GM13977 (cell line): ENCODE measurements at regions of chr5 and their contacts with region 1.

Region 1: DNA sequence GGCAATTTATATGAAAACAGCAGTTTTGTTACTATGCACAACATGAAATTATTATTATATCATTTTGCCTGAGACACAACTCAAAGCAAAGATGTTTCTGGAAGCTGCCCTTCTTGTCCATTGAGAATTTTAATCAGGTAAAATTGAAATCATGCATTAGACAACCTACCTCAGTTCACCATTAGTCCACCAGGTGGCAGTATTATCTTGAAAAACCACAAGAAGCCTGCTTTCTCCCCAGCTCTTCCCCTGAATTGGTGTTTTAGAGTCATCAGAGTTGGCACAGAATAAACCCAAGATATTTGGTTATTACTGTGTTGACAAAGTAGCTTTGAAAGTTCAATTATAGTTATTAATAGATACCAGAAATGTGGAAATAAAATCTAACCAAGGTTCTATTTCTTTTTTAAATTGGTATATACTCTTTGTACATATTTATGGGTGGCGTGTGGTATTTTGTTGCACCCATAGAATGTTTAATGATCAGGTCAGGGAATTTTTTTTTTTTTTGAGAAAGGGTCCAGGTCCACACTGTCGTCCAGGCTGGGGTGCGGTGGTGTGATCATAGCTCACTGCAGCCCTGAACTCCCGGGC is 25.7 kb downstream of the UTP15 start:
- DNase-seq: peak; percentile 39
- CTCF ChIP-seq: peak; percentile 70

Region 2: DNA sequence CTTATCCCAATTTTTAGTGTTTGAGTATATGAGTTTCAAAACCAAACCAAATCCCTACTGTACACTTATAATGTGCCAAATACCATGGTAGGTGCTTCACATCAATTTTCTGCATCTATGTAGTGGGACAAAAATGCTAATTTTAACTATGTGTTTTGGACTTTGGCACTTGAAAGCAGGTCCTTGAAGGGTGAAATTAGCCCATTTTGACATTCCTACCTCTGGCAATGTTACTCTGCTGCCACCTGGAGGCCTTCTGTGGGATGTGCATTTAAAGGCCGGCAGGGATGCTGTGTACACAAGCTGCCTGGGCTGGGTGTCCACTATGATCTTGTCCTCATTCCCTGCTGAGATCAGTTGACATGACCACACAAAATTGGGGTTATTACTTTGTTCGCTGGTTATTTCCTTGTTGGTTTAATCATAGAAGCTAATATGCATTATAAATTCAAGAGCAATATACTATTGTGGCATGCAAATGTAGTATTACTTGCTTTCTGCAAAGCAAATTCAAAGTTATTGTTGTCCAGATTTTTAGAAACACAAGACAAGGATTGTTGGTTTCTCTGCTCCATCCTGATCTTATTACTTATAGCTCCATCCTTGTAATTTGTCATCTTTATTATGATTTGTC is 201.6 kb after region 1 on chr5:
- in situ Hi-C with region 1: loop called (anchors 5 kb)
- DNase-seq: peak; percentile 52
- CTCF ChIP-seq: peak; percentile 92

Region 3: GRCh38 chr5:73902327-73903051 is 311.3 kb after region 1 on chr5:
- in situ Hi-C with region 1: no loop called
- DNase-seq: peak; percentile 57
- CTCF ChIP-seq: peak; percentile 70

Region 4: DNA sequence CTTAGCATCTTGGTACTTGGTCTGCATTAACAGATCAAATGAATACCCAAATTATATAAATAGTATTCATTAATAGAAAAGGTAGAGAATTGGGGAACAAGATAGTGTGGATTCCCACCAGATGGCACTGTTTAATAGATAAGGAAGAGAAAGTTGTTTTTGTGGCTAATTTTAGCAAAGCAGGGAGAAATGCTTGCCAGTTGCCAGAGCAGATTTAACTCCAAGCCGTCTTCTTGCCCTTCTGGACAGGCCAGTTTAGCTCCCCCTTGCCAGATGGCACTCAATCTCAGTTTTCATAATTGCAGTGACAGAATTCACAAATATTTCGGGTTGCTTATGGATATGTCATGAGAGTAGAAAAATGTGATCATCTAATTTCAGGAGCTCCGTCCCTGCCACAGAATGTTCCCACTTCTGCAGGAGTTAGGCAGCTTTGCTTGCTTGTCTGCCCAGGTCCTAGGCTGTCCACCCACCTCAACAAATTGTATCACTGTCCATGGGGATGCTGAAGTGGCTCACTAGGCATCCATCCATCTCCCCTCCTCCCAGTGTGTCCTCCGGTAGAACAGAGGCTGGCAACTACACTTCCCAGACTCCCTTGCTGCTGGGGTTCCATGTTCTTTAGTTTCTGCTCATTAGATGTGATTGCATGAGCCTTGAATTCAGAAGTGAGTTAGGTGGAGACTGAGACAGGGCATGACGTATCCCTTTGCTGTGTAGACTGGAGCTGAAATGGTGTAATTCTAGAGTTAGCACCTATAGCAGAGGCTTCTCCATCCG is 1082.0 kb after region 1 on chr5:
- in situ Hi-C with region 1: loop called (anchors 25 kb)
- DNase-seq: no peak
- CTCF ChIP-seq: peak; percentile 26